ENCODE measurements at regions of chr9 and their contacts with region 1.

Region 1: GRCh38 chr9:92140074-92140753 is 25.0 kb upstream of the SPTLC1 start:
- DNase-seq: peak; percentile 77
- H3K4me3 Mint-ChIP-seq: no peak overlapping the region
- H3K27ac Mint-ChIP-seq: no peak overlapping the region
- H3K4me1 Mint-ChIP-seq: peaks cover 7% of the 10 kb centered on the region
- H3K27me3 Mint-ChIP-seq: peaks cover 30% of the 10 kb centered on the region

Region 2: DNA sequence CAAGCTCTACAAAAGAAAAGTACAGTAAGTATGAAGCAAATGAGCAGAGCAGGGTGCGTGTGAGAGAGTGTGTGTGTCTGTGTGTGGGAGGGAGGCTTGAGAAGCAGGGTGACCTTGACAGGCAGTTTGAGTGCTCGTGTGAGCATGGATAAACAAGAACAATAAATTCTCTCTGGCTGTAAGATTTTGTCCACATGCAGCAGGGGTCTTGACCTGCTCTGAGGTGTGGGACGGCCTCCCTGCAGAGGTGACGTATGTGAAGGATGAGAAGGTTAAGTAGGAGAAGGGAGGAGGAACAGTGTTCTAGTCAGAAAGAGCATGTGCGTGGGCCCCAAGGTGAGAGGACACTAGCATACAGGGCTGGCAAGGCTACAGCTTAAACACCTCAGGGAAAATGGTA is 74.0 kb before region 1 on chr9:
- CTCF ChIA-PET with region 1: no interaction called
- intact Hi-C with region 1: no loop called
- DNase-seq: no peak
- H3K4me3 Mint-ChIP-seq: no peak overlapping the region
- H3K27ac Mint-ChIP-seq: no peak overlapping the region
- H3K4me1 Mint-ChIP-seq: no peaks in the 10 kb centered on the region
- H3K27me3 Mint-ChIP-seq: no peaks in the 10 kb centered on the region

Region 3: GRCh38 chr9:92170848-92171247 is 30.6 kb after region 1 on chr9:
- CTCF ChIA-PET with region 1: interaction called, 14 read pairs
- intact Hi-C with region 1: no loop called
- DNase-seq: no peak
- H3K4me3 Mint-ChIP-seq: no peak overlapping the region
- H3K27ac Mint-ChIP-seq: no peak overlapping the region
- H3K4me1 Mint-ChIP-seq: no peaks in the 10 kb centered on the region
- H3K27me3 Mint-ChIP-seq: peaks cover 6% of the 10 kb centered on the region

Region 4: GRCh38 chr9:92293452-92294296 is 153.5 kb after region 1 on chr9 and contains the start of gene IARS1:
- CTCF ChIA-PET with region 1: interaction called, 4 read pairs
- intact Hi-C with region 1: loop called (anchors 1 kb)
- DNase-seq: peak; percentile 100
- H3K4me3 Mint-ChIP-seq: peak within 1 kb of the TSS; percentile 95
- H3K27ac Mint-ChIP-seq: peak within 1 kb of the TSS; percentile 97
- H3K4me1 Mint-ChIP-seq: peaks cover 49% of the 10 kb centered on the region
- H3K27me3 Mint-ChIP-seq: no peaks in the 10 kb centered on the region
- total RNA-seq, gene IARS1: 271 to 272 TPM

Region 5: DNA sequence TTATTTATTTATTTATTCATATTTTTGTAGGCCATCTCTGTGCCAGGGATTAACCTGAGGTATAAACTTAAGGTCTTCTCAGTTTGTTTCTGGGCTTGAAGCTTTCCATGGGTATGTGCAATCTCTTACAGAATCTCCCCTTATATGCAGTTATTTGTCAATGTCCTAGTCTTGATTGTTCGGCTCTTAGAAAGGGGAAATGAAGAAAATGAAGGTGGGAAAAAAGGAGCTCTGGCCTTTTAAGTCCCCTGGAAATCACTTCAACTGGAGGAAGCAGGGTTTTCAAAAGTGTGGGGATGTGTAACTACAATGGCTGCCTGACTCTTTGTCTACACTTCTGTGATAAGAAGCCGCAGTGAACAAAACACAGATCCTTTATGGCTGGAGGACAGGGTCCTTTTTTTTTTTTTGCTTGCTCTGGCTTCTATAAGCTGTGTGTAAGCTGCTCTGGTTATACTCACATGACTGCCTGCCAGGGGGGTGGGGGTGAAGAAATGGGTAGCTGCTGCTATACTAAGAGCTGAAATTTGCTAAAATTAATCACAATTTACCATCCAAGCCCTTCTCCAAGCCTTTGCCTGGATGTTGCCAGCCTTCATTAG is 219.3 kb after region 1 on chr9:
- CTCF ChIA-PET with region 1: no interaction called
- intact Hi-C with region 1: no loop called
- DNase-seq: no peak
- H3K4me3 Mint-ChIP-seq: no peak overlapping the region
- H3K27ac Mint-ChIP-seq: no peak overlapping the region
- H3K4me1 Mint-ChIP-seq: no peaks in the 10 kb centered on the region
- H3K27me3 Mint-ChIP-seq: no peaks in the 10 kb centered on the region

Region 6: DNA sequence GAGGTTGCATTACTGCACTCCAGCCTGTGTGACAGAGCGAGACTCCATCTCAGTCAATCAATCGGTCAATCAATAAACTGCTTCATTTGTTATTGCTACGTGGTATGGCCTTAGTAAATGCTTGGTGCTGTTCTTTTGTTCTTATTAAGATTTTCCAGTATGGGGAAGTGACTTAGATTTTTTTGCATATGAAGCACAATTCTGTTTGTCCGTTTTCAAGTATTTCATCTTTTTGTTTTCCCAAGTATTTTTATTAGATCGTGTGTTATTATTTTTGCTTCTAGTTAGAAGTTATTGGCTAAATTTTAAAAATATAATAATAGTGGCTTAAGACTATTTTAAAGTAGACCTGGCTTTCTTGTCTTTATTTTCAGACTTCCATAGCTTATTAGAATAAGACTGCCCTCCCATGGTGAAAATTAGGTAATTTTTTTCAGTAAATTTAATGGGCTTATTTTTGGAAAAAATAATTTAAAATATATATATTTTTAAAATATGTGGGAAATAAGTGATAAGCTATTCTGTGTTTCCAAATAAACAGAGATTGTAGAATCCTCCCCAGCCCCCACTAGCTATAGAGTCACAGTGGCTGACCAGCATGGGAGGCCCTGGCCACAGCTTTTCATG is 298.8 kb after region 1 on chr9:
- CTCF ChIA-PET with region 1: interaction called, 17 read pairs
- intact Hi-C with region 1: loop called (anchors 1 kb)
- DNase-seq: no peak
- H3K4me3 Mint-ChIP-seq: no peak overlapping the region
- H3K27ac Mint-ChIP-seq: no peak overlapping the region
- H3K4me1 Mint-ChIP-seq: peaks cover 4% of the 10 kb centered on the region
- H3K27me3 Mint-ChIP-seq: no peaks in the 10 kb centered on the region

Region 7: DNA sequence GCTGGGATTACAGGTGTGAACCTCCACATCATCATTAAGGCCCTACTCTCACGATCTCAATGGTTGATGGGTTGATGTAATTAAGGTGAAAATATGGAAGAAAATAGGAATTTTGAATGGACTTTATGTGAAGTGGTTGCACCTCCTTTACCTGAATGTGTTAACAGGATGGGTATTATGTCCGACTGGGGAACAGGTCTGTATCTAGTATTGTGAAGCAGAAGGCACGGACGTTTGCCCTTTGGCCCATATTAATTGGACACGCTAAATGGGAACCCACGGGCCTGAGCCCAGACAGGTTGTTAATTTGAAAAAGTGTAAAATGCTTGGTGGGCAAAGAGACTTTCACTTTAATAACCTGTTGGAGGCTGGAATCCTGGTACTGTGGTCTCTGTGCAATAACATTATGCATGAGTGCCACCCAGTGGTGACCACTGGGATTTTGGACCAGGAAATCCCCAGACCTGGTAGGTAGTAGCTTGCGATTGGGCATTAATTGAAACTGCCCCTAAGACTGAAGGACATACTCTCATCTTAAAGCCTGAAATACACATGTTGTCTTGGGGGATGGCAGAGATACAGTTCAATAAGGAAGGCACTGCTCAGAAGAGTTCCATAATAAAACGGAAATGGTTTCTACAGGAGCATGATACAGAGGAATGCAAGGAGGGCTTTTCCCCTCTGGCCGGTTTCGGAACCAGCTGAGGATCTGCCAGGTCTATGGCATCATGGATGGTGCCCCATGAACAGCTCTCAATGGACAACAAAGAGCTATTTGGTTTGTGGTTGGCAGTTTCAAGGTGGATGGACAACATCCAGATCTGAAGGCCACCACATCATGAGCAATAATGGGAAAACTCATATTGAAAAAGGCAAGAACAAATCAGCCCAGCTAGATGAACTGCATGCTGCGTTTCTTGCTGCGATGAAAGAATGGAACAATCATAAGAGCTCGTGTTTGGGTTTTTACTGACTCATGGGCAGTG is 650.6 kb after region 1 on chr9:
- CTCF ChIA-PET with region 1: interaction called, 18 read pairs
- intact Hi-C with region 1: loop called (anchors 1 kb)
- DNase-seq: peak; percentile 85
- H3K4me3 Mint-ChIP-seq: no peak overlapping the region
- H3K27ac Mint-ChIP-seq: no peak overlapping the region
- H3K4me1 Mint-ChIP-seq: peaks cover 3% of the 10 kb centered on the region
- H3K27me3 Mint-ChIP-seq: no peaks in the 10 kb centered on the region

Region 8: GRCh38 chr9:93262537-93263242 is 1122.5 kb after region 1 on chr9:
- CTCF ChIA-PET with region 1: no interaction called
- intact Hi-C with region 1: no loop called
- DNase-seq: no peak
- H3K4me3 Mint-ChIP-seq: no peak overlapping the region
- H3K27ac Mint-ChIP-seq: no peak overlapping the region
- H3K4me1 Mint-ChIP-seq: peaks cover 2% of the 10 kb centered on the region
- H3K27me3 Mint-ChIP-seq: no peaks in the 10 kb centered on the region